Left cardiac atrium (tissue), 4 donors: ENCODE measurements at regions of chr9 and their contacts with region 1.

Region 1: GRCh38 chr9:2809691-2810433 is 34.0 kb downstream of the PUM3 start:
- DNase-seq: no peak
- ATAC-seq: peak; percentile 92 to 94

Region 2: DNA sequence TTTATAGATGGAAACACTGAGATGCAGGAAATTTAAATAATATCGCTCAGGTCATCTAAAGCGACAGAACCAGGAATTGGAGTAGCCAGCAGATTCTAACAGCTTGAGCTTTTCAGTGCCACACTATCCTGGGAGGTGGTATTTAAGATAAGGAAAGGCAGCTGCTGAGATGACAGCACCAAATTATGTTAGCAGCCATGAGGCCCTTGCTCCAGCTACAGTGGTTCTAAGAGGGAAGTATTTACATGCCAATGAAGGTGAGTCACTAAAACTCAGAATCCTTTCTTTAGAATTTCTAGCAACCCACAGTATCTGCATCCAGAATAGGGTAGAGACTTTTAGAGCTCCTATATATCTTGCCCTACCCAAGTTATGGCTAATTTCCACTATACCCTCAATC is 315.3 kb before region 1 on chr9:
- intact Hi-C with region 1: loop called in 1 of 2 experiments (anchors 10 kb)
- DNase-seq: no peak
- ATAC-seq: peak in 1 of 2 donors; percentile 71

Region 3: DNA sequence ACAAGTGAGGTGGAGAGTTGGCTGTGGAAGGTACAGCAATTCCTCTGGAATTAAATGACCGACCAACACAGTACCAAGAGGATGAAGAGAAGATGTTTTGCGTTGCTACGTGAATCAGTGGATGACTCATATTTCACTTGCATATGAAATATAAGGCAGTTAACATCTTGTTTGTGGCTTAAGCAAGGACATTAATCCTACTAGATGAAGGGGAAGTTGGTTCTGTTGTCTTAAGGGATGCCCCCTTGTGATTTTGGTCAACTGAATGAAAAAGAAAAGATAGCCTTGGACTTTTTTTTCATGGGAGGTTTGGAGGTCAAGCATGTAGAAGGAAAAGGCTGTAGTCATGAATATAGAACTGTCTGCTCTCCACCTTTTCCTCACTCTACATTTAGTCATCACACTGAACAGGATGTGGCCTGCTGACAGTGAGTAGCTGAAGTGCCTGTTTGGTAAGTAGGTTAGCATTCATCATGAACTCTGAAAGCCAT is 154.4 kb before region 1 on chr9:
- intact Hi-C with region 1: loop called in 1 of 2 experiments (anchors 10 kb)
- DNase-seq: no peak
- ATAC-seq: peak; percentile 65 to 89

Region 4: GRCh38 chr9:2771662-2772061 is 38.2 kb before region 1 on chr9:
- intact Hi-C with region 1: no loop called
- DNase-seq: no peak
- ATAC-seq: peak in 1 of 2 donors; percentile 83

Region 5: DNA sequence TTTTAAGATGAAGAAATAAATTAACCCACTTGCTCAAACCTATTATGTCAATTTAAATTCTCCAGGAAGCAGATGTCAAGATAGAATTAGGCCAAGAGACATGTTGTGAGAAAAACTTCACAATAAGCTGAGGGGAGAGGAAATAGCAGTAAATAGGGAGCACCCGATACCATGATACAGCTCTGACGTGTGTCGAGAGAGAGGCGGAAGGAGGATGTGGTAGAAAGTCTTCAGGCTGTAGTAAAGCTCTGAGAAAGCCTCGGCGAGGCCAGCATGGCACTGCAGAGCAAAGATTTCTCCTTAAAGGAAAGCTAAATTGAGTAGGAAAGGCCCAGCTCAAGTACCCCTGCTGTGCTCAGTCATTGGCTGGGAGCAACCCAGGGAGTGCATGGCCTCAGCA is 40.1 kb after region 1 on chr9:
- intact Hi-C with region 1: no loop called
- DNase-seq: no peak
- ATAC-seq: no peak

Region 6: DNA sequence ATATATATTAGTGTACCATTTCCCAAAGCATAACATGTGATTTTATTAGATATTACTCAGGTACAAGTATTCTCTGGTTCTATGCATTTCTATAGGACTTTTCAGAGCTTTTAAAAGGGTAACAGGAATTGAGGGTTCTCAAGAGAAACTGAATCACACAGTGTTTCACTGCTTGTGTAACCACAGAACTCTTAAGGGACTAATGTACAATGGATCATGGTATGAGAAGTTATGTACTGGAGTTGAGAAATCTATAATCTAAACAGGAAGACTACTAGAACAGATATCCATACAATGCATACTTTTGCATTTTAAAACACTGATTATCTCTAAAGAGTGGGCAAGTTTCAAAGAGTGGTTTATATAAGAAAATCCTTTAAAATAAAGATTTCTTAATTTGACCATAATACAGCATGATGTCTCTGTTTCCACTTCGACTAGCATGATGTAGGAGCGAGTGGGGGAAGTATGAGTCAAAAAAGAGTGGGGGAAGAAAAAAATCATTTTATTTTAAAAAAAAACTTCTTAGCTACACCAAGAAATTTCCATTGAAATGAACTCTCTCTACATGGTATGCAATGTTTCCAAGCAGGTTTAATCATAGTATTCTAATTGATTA is 532.4 kb after region 1 on chr9:
- intact Hi-C with region 1: no loop called
- DNase-seq: no peak
- ATAC-seq: no peak